Ascending aorta (tissue), 2 donors: ENCODE measurements at regions of chr3 and their contacts with region 1.

Region 1: DNA sequence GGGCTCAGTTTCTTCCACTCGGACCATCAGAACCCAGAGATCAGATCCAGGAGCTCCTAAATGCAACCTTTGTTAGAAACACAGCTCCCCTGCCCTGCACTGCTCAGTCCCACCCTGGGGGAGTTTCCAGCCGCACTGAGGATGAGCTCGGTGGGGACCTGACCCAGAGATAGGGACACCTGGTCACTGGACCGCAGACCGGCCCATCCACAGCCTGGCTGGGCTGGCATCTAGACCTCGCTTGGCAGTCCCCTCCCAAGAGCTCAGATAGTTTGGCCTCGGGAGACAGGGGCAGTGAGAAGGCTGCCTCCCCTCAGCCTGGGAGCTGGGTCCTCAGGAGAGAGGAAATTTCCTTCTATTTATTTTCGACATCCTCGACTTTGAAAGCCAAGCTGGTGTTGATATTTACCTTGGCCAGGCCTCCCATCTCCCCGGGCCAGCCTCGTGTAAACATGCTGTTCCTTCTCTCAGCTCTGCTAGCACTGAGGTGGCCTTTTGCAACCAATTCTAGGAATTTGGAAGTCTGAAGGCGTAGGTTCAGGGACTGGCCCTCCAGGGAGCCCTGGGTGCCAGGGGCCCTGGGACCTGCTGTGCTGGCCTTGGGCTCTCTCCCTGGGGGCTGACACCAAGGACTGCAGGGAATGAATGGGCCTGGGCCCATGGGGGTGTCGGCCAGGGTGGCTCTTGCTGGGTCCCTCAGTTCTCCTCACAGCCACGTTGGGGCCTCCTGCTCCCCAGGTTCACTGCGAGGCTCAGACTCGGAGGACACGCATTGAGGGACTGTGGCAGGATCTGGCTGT is 90.1 kb downstream of the VGLL4 start:
- DNase-seq: peak; percentile 36 to 92
- H3K4me3 ChIP-seq: no peak overlapping the region
- H3K27ac ChIP-seq: peak overlapping the region; percentile 71 to 90
- H3K4me1 ChIP-seq: peaks cover 25 to 50% of the 10 kb centered on the region in 2 donors
- H3K27me3 ChIP-seq: no peaks in the 10 kb centered on the region
- CTCF ChIP-seq: no peak

Region 2: DNA sequence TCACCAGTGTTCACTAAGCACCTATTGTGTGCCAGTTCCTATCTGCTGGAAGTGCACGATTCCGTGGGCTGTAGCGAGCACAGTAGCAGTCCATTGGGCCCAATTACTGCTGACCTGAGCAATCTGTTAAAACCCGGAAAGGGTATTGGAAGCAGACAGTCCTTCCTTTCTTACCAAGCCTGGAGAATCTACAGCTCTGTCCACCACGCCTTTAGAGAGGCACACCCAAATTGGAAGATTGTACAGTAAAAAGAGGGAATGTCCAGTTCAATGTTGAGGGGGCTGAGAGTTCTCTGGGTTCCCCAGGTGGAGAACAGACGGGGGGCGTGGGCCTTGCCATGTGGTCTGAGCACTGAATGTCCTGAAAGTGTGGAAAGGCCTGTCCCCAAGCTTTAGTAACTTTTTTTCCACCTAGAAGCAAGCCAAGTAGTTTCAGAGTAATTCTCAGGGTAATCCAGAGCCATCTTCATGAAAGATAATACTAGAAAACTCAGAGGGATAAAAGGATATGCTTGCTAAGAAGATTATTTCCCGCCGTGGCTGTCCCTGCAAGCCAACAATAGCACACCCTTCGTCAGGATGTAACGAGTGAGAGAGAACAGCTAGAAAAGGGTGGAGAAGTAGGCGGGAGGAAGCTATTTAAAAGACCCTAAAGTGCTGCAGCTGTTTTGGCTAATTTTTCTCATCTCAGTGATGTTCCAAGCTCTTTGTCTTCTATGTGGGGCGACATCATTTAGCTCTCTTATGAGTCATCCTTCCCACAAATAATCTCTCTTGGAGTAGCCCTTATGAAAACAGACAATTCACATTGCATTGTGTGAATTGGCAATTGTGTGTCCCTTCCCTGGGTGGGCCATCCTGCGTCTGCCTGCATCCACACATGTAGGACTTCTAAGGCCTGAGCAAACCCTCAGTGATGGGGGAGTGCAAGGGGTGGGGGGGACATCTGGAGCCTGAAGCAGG is 100.5 kb before region 1 on chr3:
- intact Hi-C with region 1: no loop called
- DNase-seq: no peak
- H3K4me3 ChIP-seq: no peak overlapping the region
- H3K27ac ChIP-seq: peak overlapping the region; percentile 38 to 64
- H3K4me1 ChIP-seq: peaks cover 0 to 8% of the 10 kb centered on the region in 2 donors
- H3K27me3 ChIP-seq: no peaks in the 10 kb centered on the region
- CTCF ChIP-seq: no peak

Region 3: GRCh38 chr3:11517601-11518000 is 36.0 kb before region 1 on chr3:
- intact Hi-C with region 1: loop called (anchors 5 kb)
- DNase-seq: peak in 1 of 2 donors; percentile 16
- H3K4me3 ChIP-seq: no peak overlapping the region
- H3K27ac ChIP-seq: no peak overlapping the region
- H3K4me1 ChIP-seq: peaks cover 8 to 23% of the 10 kb centered on the region in 2 donors
- H3K27me3 ChIP-seq: no peaks in the 10 kb centered on the region
- CTCF ChIP-seq: no peak